CD4-positive, alpha-beta T cell (primary cell): ENCODE measurements at regions of chr16 and their contacts with region 1.

Region 1: GRCh38 chr16:21554795-21555585 is 44.4 kb upstream of the METTL9 start:
- DNase-seq: peak; percentile 82 to 95 (median 88)
- ATAC-seq: peak; percentile 99
- H3K4me3 ChIP-seq: no peak overlapping the region
- H3K4me3 Mint-ChIP-seq: peak overlapping the region; percentile 1
- H3K27ac ChIP-seq: no peak overlapping the region
- H3K27ac Mint-ChIP-seq: no peak overlapping the region
- H3K4me1 ChIP-seq: peaks cover 10% of the 10 kb centered on the region
- H3K4me1 Mint-ChIP-seq: peaks cover 6% of the 10 kb centered on the region
- H3K27me3 ChIP-seq: no peaks in the 10 kb centered on the region
- H3K27me3 Mint-ChIP-seq: no peaks in the 10 kb centered on the region
- CTCF ChIP-seq: peak; percentile 100

Region 2: DNA sequence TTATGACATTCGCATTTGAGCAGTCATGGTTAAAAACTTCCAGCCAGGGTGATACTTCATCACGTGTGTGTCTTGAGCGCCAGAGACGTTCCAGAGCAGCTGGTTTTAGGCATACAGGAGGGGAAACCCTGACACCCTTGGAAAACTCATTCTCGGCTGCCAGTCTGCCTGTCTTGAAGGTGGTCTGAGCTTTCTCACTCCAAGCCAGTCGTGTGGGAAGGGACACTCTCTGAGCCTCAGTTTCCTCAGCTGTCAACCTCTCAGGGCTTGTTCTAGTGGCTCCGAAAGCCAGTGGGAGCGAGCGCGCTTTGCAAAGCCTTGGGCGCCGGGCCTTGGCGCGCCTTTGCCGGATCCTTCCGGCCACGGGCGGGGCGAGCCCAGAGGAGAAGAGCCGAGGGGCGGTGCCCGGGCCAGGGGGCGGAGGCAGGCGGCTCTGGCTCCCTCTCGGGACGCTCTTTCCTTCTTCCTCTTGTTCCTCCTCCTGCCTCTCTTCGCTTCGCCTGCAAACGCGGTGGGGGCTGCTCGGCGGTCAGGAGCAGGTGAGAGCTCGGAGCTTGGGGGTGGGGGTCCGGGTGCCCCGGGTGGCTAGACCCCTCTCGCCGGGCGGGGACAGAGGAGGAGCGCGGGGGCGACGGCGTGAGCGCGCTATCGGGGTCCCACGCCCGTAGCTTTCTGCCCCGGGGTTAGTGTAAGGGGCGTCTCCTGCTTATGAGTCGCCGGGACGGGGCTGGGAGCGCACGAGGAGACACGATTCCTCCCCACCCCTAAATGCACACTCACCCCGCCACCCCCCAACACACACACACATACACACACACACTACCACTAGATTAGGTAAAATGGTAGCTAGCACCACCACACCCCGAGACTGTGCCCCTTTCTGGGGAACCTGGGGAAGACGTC is 396.5 kb before region 1 on chr16 and contains the start of gene LDAF1:
- CTCF ChIA-PET with region 1: no interaction called
- POLR2A ChIA-PET with region 1: no interaction called
- intact Hi-C with region 1: loop called in 1 of 2 experiments (anchors 2 kb)
- DNase-seq: peak; percentile 56 to 86 (median 76)
- ATAC-seq: peak; percentile 96
- H3K4me3 ChIP-seq: peak within 1 kb of the TSS; percentile 77
- H3K4me3 Mint-ChIP-seq: peak within 1 kb of the TSS; percentile 92
- H3K27ac ChIP-seq: peak within 1 kb of the TSS in 1 of 2 donors; percentile 14
- H3K27ac Mint-ChIP-seq: peak within 1 kb of the TSS; percentile 41
- H3K4me1 ChIP-seq: peaks cover 22% of the 10 kb centered on the region
- H3K4me1 Mint-ChIP-seq: peaks cover 26% of the 10 kb centered on the region
- H3K27me3 ChIP-seq: no peaks in the 10 kb centered on the region
- H3K27me3 Mint-ChIP-seq: no peaks in the 10 kb centered on the region
- CTCF ChIP-seq: no peak
- total RNA-seq, gene LDAF1: 11.0 to 11.2 TPM

Region 3: DNA sequence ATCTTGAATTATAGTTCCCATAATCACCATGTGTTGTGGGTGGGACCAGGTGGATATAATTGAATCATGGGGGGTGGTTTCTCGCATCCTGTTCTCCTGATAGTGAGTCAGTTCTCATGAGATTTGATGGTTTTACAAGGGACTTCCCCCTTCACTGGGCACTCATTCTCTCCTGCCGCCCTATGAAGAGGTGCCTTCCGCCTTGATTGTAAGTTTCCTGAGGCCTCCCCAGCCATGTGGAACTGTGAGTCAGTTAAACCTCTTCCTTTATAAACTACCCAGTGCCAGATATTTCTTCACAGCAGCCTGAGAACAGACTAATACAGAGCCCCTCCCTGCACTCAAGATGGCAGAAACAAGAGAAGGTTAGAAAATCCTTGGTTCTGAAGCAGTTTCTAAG is 370.2 kb before region 1 on chr16:
- CTCF ChIA-PET with region 1: no interaction called
- POLR2A ChIA-PET with region 1: no interaction called
- intact Hi-C with region 1: loop called (anchors 2 kb)
- DNase-seq: peak in 2 of 14 experiments; percentile 4 to 31
- ATAC-seq: no peak
- H3K4me3 ChIP-seq: no peak overlapping the region
- H3K4me3 Mint-ChIP-seq: no peak overlapping the region
- H3K27ac ChIP-seq: no peak overlapping the region
- H3K27ac Mint-ChIP-seq: no peak overlapping the region
- H3K4me1 ChIP-seq: peaks cover 5% of the 10 kb centered on the region
- H3K4me1 Mint-ChIP-seq: peaks cover 5% of the 10 kb centered on the region
- H3K27me3 ChIP-seq: no peaks in the 10 kb centered on the region
- H3K27me3 Mint-ChIP-seq: peaks cover 5% of the 10 kb centered on the region
- CTCF ChIP-seq: no peak

Region 4: GRCh38 chr16:21523411-21524067 is 31.5 kb before region 1 on chr16:
- CTCF ChIA-PET with region 1: no interaction called
- POLR2A ChIA-PET with region 1: no interaction called
- intact Hi-C with region 1: loop called in 1 of 2 experiments (anchors 5 kb)
- DNase-seq: peak in 1 of 14 experiments; percentile 29
- ATAC-seq: no peak
- H3K4me3 ChIP-seq: no peak overlapping the region
- H3K4me3 Mint-ChIP-seq: peak overlapping the region; percentile 51
- H3K27ac ChIP-seq: no peak overlapping the region
- H3K27ac Mint-ChIP-seq: no peak overlapping the region
- H3K4me1 ChIP-seq: peaks cover 9% of the 10 kb centered on the region
- H3K4me1 Mint-ChIP-seq: peaks cover 9% of the 10 kb centered on the region
- H3K27me3 ChIP-seq: no peaks in the 10 kb centered on the region
- H3K27me3 Mint-ChIP-seq: no peaks in the 10 kb centered on the region
- CTCF ChIP-seq: no peak

Region 5: GRCh38 chr16:21638573-21638975 is 83.6 kb after region 1 on chr16:
- CTCF ChIA-PET with region 1: no interaction called
- POLR2A ChIA-PET with region 1: no interaction called
- intact Hi-C with region 1: no loop called
- DNase-seq: peak in 4 of 14 experiments; percentile 28 to 53 (median 42)
- ATAC-seq: peak; percentile 44
- H3K4me3 ChIP-seq: no peak overlapping the region
- H3K4me3 Mint-ChIP-seq: no peak overlapping the region
- H3K27ac ChIP-seq: peak overlapping the region; percentile 17 to 32
- H3K27ac Mint-ChIP-seq: peak overlapping the region; percentile 32
- H3K4me1 ChIP-seq: peaks cover 21% of the 10 kb centered on the region
- H3K4me1 Mint-ChIP-seq: peaks cover 27% of the 10 kb centered on the region
- H3K27me3 ChIP-seq: no peaks in the 10 kb centered on the region
- H3K27me3 Mint-ChIP-seq: no peaks in the 10 kb centered on the region
- CTCF ChIP-seq: no peak

Region 6: DNA sequence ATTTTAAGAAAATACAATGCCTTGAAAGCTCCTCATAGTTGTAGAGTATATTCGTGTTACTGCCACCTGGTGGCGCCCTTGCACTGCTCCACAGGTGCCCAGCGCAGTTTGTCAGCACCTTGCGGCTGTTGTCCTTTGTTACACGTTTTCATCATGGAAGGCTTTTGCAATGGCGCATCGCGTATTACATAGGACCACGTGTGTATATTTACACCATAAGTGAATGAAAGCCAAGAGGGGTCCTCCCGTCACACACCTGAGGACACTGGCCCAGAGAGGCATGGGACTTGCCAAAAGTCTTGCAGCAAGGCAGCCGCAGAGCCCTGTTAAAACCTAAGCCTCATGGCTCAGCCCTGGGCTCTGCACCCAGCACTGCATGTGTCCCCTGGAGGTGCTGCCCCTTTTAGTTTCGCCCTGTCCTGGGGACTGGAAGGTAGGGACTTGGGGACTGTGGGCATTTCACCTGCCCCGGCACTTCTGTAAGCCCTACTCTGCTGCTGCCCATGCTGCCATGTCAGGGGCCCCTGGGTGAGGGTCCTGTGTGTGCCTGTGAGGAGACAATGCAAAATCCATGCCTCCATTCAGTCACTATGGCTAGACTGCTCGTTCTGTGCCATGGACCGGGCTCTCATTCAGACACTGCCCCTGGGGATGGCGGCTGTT is 766.5 kb after region 1 on chr16:
- CTCF ChIA-PET with region 1: no interaction called
- POLR2A ChIA-PET with region 1: no interaction called
- intact Hi-C with region 1: loop called in 1 of 2 experiments (anchors 5 kb)
- DNase-seq: peak; percentile 54 to 89 (median 69)
- ATAC-seq: peak; percentile 81
- H3K4me3 ChIP-seq: no peak overlapping the region
- H3K4me3 Mint-ChIP-seq: no peak overlapping the region
- H3K27ac ChIP-seq: no peak overlapping the region
- H3K27ac Mint-ChIP-seq: peak overlapping the region; percentile 82
- H3K4me1 ChIP-seq: peaks cover 10% of the 10 kb centered on the region
- H3K4me1 Mint-ChIP-seq: peaks cover 11% of the 10 kb centered on the region
- H3K27me3 ChIP-seq: no peaks in the 10 kb centered on the region
- H3K27me3 Mint-ChIP-seq: no peaks in the 10 kb centered on the region
- CTCF ChIP-seq: peak; percentile 99

Region 7: GRCh38 chr16:23060458-23061320 is 1505.7 kb after region 1 on chr16:
- CTCF ChIA-PET with region 1: no interaction called
- POLR2A ChIA-PET with region 1: no interaction called
- intact Hi-C with region 1: loop called in 1 of 2 experiments (anchors 2 kb)
- DNase-seq: peak; percentile 18 to 74 (median 38)
- ATAC-seq: peak; percentile 77
- H3K4me3 ChIP-seq: no peak overlapping the region
- H3K4me3 Mint-ChIP-seq: no peak overlapping the region
- H3K27ac ChIP-seq: no peak overlapping the region
- H3K27ac Mint-ChIP-seq: no peak overlapping the region
- H3K4me1 ChIP-seq: no peaks in the 10 kb centered on the region
- H3K4me1 Mint-ChIP-seq: no peaks in the 10 kb centered on the region
- H3K27me3 ChIP-seq: peaks cover 0 to 4% of the 10 kb centered on the region in 2 experiments
- H3K27me3 Mint-ChIP-seq: peaks cover 14% of the 10 kb centered on the region
- CTCF ChIP-seq: peak; percentile 88